ENCODE measurements at regions of chr21 and their contacts with region 1.

Region 1: GRCh38 chr21:41460578-41461527 is 34.8 kb downstream of the MX1 start:
- DNase-seq: peak; percentile 87
- H3K4me3 ChIP-seq: no peak overlapping the region
- H3K27ac ChIP-seq: no peak overlapping the region
- H3K4me1 ChIP-seq: peaks cover 0 to 7% (median 5%) of the 10 kb centered on the region in 4 donors
- H3K27me3 ChIP-seq: no peaks in the 10 kb centered on the region
- CTCF ChIP-seq: peak; percentile 47 to 78 (median 72)
- EP300 ChIP-seq: no peak
- POLR2A ChIP-seq: no peak

Region 2: DNA sequence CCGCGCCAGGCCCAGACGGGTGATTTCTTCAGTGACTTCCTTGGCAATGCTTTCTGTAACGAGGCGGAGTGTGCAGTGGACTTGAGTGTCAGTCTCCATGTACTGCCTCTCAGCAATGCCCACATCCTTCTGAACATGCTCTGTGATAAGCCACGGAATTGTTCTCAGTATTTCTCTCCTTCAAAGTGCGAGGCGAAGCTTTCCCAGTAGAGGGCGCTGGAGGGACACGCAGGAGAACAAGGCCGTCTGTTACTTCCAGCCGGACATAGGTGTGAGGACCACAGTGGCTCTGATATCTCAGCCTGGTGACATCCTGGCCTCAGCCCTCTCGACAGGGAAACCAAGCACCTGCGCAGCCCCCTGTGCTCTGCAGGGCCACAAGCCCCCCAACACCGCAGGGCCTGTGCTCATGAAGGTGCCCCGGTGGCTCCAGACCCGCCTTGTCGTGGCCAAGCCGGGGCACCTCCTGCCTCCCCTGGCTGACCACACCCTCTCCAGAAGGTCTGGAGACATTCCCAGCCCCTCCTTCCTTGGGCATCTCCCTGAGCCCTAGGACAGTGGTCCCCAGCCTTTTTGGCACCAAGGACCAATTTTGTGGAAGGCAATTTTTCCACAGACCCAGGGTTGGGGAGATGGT is 338.9 kb before region 1 on chr21:
- intact Hi-C with region 1: loop called (anchors 5 kb)
- DNase-seq: peak; percentile 88
- H3K4me3 ChIP-seq: no peak overlapping the region
- H3K27ac ChIP-seq: no peak overlapping the region
- H3K4me1 ChIP-seq: peaks cover 0 to 13% (median 7%) of the 10 kb centered on the region in 4 donors
- H3K27me3 ChIP-seq: peaks cover 0 to 10% (median 0%) of the 10 kb centered on the region in 3 donors
- CTCF ChIP-seq: peak; percentile 67 to 85 (median 76)
- EP300 ChIP-seq: no peak
- POLR2A ChIP-seq: no peak

Region 3: DNA sequence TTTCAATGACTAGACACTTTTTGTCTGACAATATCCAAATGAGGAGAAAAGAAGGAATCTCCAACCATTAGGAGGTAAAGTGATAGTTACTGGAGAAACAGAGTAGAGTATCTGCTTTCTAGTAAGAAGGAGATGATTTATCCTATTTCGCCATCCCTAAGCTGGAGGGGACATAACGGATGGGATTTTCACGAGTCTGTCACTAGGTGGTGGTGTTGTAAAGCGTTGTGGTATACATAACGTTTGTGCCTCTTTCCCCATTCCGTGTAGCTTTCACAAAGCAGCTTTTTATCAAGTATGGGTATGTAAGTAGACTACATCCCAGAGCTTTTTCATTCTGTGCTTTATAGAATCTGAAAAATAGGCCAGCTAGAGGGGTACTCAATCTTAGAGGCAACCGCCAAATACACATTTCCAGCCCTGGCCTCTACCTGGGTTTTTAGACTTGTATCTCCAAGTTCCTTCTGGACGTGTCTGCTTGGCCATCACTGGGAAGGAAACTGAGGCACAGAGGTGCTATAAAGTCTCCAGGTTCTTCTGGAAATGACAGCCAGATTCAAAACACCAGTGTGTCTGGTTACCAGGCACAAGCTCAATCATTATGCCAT is 177.5 kb before region 1 on chr21:
- intact Hi-C with region 1: loop called (anchors 1 kb)
- DNase-seq: no peak
- H3K4me3 ChIP-seq: no peak overlapping the region
- H3K27ac ChIP-seq: no peak overlapping the region
- H3K4me1 ChIP-seq: peaks cover 0 to 3% (median 0%) of the 10 kb centered on the region in 4 donors
- H3K27me3 ChIP-seq: peaks cover 0 to 5% (median 0%) of the 10 kb centered on the region in 3 donors
- CTCF ChIP-seq: peak; percentile 56 to 74 (median 65)
- EP300 ChIP-seq: no peak
- POLR2A ChIP-seq: no peak

Region 4: DNA sequence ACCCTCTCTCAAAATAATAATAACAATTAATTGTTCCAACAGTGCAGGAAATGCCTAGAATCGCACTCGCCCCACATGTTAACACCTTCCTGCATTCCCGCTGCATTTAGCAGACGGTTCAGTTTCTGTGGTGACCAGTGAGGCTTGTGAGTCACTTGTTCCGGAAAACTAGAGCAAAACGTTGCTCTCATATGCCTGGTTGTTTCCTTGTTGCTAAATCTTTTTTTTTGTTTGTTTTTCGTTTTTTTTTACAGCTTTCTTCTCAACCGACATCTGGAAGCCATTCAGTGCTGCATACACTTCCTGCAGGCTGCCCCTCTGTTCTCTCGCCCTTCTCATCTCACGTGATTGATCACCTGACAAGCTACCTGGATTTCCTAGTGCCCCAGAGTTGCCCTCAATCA is 104.0 kb after region 1 on chr21:
- intact Hi-C with region 1: no loop called
- DNase-seq: no peak
- H3K4me3 ChIP-seq: no peak overlapping the region
- H3K27ac ChIP-seq: no peak overlapping the region
- H3K4me1 ChIP-seq: no peaks in the 10 kb centered on the region
- H3K27me3 ChIP-seq: no peaks in the 10 kb centered on the region
- CTCF ChIP-seq: no peak
- EP300 ChIP-seq: no peak
- POLR2A ChIP-seq: no peak

Region 5: DNA sequence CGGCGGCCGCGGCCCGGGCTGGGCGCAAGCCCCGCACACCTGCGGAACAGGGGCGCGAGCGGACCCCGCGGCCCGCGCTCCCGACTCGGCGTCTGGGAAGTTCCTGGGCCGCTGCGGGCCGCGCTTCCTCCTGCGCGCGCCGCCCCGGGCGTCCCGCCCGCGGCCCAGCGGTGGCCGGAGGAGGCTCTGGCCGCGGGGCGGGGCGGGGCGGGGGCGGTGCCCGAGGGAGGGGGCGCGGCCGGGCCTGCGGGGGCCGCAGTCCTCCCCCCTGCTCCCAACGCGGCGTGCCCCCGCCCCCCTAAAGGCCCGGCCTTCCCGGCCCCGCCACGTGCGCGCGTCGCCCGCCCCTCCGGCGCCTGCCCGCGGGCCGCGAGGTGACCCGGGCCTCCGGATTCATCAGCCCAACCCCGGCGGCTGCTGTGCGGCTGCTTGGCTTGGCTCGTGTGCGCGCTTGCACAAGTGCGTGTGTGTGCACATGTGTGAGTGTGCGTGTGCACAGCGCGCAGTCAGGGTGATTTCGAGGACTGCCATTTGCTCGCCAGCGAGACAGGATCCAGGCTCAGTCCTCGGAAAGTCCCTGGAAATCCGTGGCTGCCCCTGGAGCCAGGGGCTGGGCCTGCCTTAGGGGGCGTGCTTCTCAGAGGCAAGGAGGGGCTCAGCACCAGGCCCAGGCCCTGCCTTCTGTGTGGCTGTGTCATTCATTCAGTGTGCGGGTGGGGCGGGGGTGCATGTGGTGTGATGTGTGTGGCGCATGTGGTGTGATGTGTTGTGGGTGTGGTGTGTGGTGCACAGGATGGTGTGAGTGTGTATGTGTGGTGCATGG is 493.2 kb after region 1 on chr21 and contains the start of gene C2CD2:
- intact Hi-C with region 1: no loop called
- DNase-seq: peak; percentile 83
- H3K4me3 ChIP-seq: peak within 1 kb of the TSS; percentile 54 to 96 (median 84)
- H3K27ac ChIP-seq: peak within 1 kb of the TSS; percentile 59 to 87 (median 76)
- H3K4me1 ChIP-seq: peaks cover 0 to 59% (median 42%) of the 10 kb centered on the region in 4 donors
- H3K27me3 ChIP-seq: no peaks in the 10 kb centered on the region
- CTCF ChIP-seq: no peak
- EP300 ChIP-seq: no peak
- POLR2A ChIP-seq: no peak
- total RNA-seq, gene C2CD2: 19.0 to 45.1 (median 22.2) TPM

Measured in sigmoid colon (tissue), 7 donors.